Mammary epithelial cell (primary cell): ENCODE measurements at regions of chr13 and their contacts with region 1.

Region 1: DNA sequence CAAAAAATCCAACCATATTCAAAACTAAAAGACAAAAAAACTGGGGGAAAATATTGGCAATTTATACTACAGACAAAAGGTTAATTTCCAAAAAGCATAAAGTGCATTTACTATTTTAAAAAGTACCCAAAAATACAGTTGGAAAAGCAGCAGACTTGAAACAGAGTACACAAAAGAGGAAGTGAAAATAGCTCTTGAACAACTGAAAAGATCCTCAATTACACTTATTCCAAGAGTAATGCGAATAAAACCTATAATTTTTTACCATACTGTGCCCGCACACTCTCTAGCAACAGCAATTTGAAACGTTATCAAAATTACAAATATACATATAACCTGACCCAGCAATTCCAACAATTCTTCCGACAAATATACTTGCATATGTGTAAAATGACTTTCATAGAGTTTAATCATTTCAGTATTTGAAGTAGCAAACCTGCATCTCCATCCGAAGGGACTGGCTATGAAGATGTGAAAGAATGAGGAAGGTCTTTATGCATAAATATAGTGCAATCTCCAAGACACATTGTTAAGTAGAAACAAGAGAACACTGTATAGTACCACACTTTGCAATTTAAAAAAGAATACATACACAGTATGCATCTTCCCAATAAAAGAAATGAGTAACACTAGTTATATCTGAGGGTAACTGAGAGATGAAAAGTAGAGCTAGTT is 25.4 kb downstream of the ALG5 start:
- DNase-seq: no peak
- H3K4me3 ChIP-seq: no peak overlapping the region
- H3K27ac ChIP-seq: no peak overlapping the region
- H3K4me1 ChIP-seq: no peaks in the 10 kb centered on the region
- H3K27me3 ChIP-seq: no peaks in the 10 kb centered on the region
- CTCF ChIP-seq: no peak

Region 2: GRCh38 chr13:36133950-36134626 is 839.7 kb before region 1 on chr13:
- CTCF ChIA-PET with region 1: no interaction called
- dilution Hi-C with region 1: no loop called
- in situ Hi-C with region 1: no loop called
- intact Hi-C with region 1: no loop called
- DNase-seq: no peak
- H3K4me3 ChIP-seq: no peak overlapping the region
- H3K27ac ChIP-seq: no peak overlapping the region
- H3K4me1 ChIP-seq: peaks cover 10% of the 10 kb centered on the region
- H3K27me3 ChIP-seq: peaks cover 21% of the 10 kb centered on the region
- CTCF ChIP-seq: peak in 1 of 2 donors; percentile 12

Region 3: GRCh38 chr13:37029617-37030016 is 55.9 kb after region 1 on chr13:
- CTCF ChIA-PET with region 1: no interaction called
- dilution Hi-C with region 1: no loop called
- in situ Hi-C with region 1: loop called in 1 of 2 experiments (anchors 10 kb)
- intact Hi-C with region 1: no loop called
- DNase-seq: no peak
- H3K4me3 ChIP-seq: no peak overlapping the region
- H3K27ac ChIP-seq: no peak overlapping the region
- H3K4me1 ChIP-seq: no peaks in the 10 kb centered on the region
- H3K27me3 ChIP-seq: no peaks in the 10 kb centered on the region
- CTCF ChIP-seq: no peak